Spleen (tissue), 13 donors: ENCODE measurements at regions of chr22 and their contacts with region 1.

Region 1: DNA sequence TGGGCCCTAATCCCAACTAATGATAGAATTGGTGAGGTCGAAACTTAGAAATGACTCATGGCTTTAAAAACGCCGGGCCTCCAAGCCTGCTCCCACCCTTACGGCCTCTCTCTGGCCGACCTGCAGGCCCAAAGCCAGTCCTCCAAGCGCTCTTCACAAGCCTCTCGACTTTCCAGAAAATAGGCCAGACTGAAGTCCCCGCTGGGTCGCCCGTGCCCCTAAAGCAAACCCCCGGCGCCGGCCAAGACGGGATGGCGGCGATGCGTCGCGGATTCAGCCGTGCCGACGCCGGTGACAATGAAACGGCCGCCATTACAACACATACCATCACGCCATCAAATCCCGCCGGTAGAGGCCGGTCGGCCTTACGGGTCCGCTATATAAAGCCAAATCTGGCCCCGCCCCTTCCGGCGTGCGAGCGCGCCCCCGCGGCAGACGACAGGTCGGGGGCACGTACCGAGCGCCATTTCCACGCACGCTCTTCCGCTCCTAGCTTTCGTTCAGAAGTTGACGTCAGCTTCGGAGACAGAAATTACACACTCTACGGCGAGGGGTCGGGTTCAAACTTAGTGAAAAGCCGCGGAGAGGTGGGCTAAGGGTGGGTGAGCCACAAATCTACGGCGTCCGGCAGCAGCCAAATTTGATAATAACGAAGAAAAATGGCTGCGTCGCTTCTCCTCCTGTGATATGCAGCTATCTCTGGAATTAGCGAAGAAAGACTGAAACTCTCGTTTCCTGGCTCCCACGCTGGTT is at the start of gene RPL3:
- DNase-seq: peak; percentile 99
- H3K4me3 ChIP-seq: peak within 1 kb of the TSS; percentile 51 to 87 (median 61)
- H3K27ac ChIP-seq: peak within 1 kb of the TSS; percentile 92 to 100 (median 98)
- H3K4me1 ChIP-seq: peaks cover 39 to 58% (median 51%) of the 10 kb centered on the region in 6 donors
- H3K27me3 ChIP-seq: no peaks in the 10 kb centered on the region
- CTCF ChIP-seq: peak in 10 of 11 experiments; percentile 3 to 56 (median 31)
- POLR2A ChIP-seq: peak; percentile 10 to 89 (median 82)
- total RNA-seq, gene RPL3: 1,607 to 2,098 (median 1,685) TPM

Region 2: GRCh38 chr22:38872172-38872830 is 447.1 kb before region 1 on chr22 and contains the start of gene CBX6:
- intact Hi-C with region 1: loop called (anchors 5 kb)
- DNase-seq: peak; percentile 98
- H3K4me3 ChIP-seq: peak within 1 kb of the TSS; percentile 59 to 91 (median 76)
- H3K27ac ChIP-seq: peak within 1 kb of the TSS; percentile 81 to 94 (median 90)
- H3K4me1 ChIP-seq: peaks cover 34 to 63% (median 47%) of the 10 kb centered on the region in 6 donors
- H3K27me3 ChIP-seq: peaks cover 0 to 5% (median 0%) of the 10 kb centered on the region in 7 donors
- CTCF ChIP-seq: no peak
- POLR2A ChIP-seq: peak in 1 of 3 donors; percentile 77
- total RNA-seq, gene CBX6: 35.8 to 72.2 (median 49.2) TPM

Region 3: GRCh38 chr22:39013942-39014722 is 305.3 kb before region 1 on chr22 and contains the start of gene APOBEC3C:
- intact Hi-C with region 1: loop called (anchors 10 kb)
- DNase-seq: peak; percentile 91
- H3K4me3 ChIP-seq: peak within 1 kb of the TSS; percentile 48 to 78 (median 60)
- H3K27ac ChIP-seq: peak within 1 kb of the TSS; percentile 85 to 96 (median 92)
- H3K4me1 ChIP-seq: peaks cover 11 to 66% (median 39%) of the 10 kb centered on the region in 6 donors
- H3K27me3 ChIP-seq: no peaks in the 10 kb centered on the region
- CTCF ChIP-seq: peak in 9 of 11 experiments; percentile 7 to 53 (median 29)
- POLR2A ChIP-seq: peak in 2 of 3 donors; percentile 39 to 68
- total RNA-seq, gene APOBEC3C: 23.5 to 72.4 (median 54.2) TPM

Region 4: GRCh38 chr22:39205338-39206021 is 114.0 kb before region 1 on chr22:
- intact Hi-C with region 1: no loop called
- DNase-seq: peak; percentile 67
- H3K4me3 ChIP-seq: no peak overlapping the region
- H3K27ac ChIP-seq: no peak overlapping the region
- H3K4me1 ChIP-seq: peaks cover 0 to 13% (median 5%) of the 10 kb centered on the region in 6 donors
- H3K27me3 ChIP-seq: peaks cover 0 to 4% (median 0%) of the 10 kb centered on the region in 7 donors
- CTCF ChIP-seq: no peak
- POLR2A ChIP-seq: no peak